ENCODE measurements at regions of chr9 and their contacts with region 1.

Region 1: DNA sequence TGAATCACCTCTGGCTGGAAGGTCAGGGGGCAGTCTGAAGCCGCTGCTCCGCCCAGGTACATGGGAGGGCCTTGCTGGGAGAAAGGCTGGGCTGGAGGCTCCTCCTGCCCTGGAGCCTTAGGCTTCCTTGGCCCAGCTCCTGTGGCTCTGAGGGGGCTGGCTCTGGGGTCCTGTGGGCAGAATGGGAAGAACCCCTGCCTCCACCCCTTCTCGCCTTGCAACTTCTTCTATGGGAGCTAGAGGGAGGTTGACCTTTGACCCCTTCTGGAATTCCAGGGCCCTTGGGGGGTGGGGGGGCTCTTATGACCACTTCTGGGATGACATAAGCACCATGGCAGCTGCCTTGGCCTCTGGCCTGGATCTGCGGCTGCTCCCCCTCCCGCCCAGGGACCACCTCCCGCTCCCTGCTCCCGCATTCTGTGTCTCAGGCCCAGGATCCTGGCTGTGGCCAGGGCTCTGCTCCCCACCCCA is 32.2 kb downstream of the IER5L start:
- DNase-seq: peak; percentile 82 to 90
- ATAC-seq: peak; percentile 33
- H3K4me3 ChIP-seq: no peak overlapping the region
- H3K27ac ChIP-seq: peak overlapping the region; percentile 58 to 85
- H3K4me1 ChIP-seq: peaks cover 0 to 6% of the 10 kb centered on the region in 2 donors
- H3K27me3 ChIP-seq: no peaks in the 10 kb centered on the region

Region 2: GRCh38 chr9:129166623-129167557 is 21.0 kb after region 1 on chr9:
- intact Hi-C with region 1: loop called in 1 of 2 experiments (anchors 2 kb)
- DNase-seq: peak; percentile 89 to 91
- ATAC-seq: peak; percentile 84
- H3K4me3 ChIP-seq: no peak overlapping the region
- H3K27ac ChIP-seq: peak overlapping the region; percentile 44 to 94
- H3K4me1 ChIP-seq: peaks cover 0 to 3% of the 10 kb centered on the region in 2 donors
- H3K27me3 ChIP-seq: no peaks in the 10 kb centered on the region

Region 3: DNA sequence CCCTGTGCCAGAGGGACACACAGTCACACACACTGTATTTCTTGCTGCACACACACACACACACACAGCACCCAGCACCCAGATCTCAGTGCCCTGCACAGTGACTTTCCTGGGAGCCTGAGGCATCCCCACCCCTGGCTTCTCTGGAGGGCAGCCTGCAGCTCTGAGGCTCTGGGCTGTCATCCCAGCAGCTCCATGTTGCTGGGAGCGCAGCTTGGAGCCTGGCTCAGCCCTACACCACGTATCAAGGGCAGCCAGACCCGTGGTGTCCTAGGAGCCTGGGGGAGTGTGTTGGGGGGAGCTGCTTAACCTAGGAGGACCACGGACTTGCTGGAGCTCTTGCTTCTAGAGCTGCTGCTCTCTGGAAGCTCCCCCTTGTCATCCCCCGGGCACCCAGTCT is 26.9 kb after region 1 on chr9:
- intact Hi-C with region 1: loop called (anchors 2 kb)
- DNase-seq: peak in 1 of 2 donors; percentile 66
- ATAC-seq: no peak
- H3K4me3 ChIP-seq: no peak overlapping the region
- H3K27ac ChIP-seq: peak overlapping the region in 1 of 2 donors; percentile 7
- H3K4me1 ChIP-seq: no peaks in the 10 kb centered on the region
- H3K27me3 ChIP-seq: no peaks in the 10 kb centered on the region

Region 4: DNA sequence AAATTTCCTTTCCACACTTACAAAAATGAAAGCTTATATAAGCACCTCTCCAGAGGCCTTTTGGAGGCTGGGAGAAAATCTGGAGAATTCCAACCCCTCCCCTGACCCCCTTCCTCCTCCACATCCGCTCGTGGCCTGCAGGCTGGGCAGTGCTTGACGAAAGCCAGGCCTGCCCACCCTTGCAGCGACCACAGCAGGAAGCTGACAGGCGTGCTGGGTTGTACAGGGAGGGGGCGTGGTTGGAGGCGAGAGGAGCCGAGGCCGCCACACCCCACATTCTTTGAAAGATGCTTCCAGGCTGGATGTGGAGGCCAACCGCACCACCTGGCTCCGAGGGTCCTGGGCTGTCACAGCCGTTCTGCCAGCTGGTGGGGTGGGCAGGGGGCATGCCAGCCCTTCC is 80.0 kb after region 1 on chr9:
- intact Hi-C with region 1: no loop called
- DNase-seq: peak in 1 of 2 donors; percentile 84
- ATAC-seq: peak; percentile 47
- H3K4me3 ChIP-seq: no peak overlapping the region
- H3K27ac ChIP-seq: no peak overlapping the region
- H3K4me1 ChIP-seq: no peaks in the 10 kb centered on the region
- H3K27me3 ChIP-seq: no peaks in the 10 kb centered on the region

Measured in aorta (tissue), 5 donors.